ENCODE measurements at regions of chr1 and their contacts with region 1.

Region 1: GRCh38 chr1:184805667-184806295 is 51.1 kb upstream of the EDEM3 start:
- DNase-seq: peak; percentile 75
- CTCF ChIP-seq: peak; percentile 96

Region 2: DNA sequence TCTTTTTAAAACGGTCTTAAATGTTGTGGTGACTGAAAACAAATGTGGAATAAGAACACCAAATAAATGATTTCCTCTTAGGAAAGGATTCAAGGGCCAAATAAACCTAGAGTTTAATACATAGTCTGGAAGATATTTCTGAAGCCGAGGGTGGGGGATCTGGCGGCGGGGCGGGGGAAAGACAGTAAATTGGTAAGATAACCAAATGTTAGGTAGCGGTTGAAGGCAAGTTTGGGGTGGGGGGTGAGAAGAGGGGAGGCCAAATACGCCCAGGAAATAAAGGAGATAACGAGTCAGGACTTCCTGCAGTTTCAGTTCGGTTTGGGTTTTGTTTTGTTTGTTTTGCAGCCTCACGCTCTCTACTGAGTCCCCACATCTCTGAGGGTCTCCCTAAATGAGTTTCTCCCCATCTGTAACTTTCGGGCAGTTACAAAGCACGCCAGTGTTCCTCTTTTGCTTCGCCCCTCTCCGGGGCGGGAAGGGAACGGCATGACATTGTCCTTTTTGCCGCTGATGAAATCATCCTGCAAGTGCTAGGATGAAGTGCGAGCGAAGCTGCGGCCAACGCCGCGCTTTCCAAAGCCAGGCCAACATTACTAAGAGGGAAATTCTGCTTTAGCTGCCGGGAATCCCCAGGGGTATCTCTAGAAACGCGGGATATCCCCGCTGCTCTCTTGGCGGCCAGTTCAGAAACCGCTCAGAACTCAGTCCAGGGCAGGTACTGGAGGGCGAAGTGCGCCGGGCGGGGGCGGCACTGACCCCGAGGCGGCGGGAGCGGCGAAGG is 167.7 kb after region 1 on chr1:
- in situ Hi-C with region 1: no loop called
- DNase-seq: peak; percentile 77
- CTCF ChIP-seq: peak; percentile 17

Region 3: GRCh38 chr1:185062710-185063370 is 257.1 kb after region 1 on chr1:
- in situ Hi-C with region 1: no loop called
- DNase-seq: peak; percentile 34
- CTCF ChIP-seq: no peak

Region 4: DNA sequence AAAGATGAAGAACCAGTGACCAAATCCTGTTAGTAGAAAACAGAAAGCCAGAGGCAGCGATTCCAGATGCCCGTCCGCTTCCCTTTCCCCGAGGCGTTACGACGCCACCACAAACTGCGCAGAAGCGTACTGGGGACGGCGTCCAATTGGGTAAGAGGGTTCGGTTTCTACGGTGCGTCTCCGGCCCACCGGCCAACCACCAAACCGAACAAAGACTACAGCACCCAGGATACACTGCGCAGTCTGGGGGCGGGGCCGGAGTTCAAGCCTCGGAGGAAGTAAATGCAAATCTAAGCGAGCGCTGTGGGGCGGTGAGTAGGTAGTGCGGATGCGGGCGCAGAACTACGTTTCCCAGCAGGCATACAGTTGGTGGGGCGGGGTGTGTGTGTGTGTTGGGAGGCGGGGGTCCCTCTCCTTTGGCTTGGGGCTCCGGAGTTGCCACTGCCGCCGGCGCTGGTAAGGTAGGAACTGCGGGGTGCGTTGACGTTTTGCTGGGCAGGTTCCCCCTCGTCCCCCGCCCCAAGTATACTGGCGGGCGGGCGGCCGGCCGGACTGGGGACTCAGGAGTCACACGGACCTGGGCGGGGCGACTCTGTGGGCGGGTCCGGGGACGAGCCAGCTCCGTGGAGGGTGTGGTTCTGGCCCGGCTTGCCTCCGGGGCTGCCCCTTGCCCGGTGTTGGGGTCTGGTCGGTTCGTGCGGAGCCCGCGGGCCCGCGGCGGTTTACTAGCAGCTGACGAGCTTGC is 351.2 kb after region 1 on chr1 and contains the starts of genes SWT1 and TRMT1L:
- in situ Hi-C with region 1: loop called (anchors 10 kb)
- DNase-seq: peak; percentile 94
- CTCF ChIP-seq: no peak

Region 5: DNA sequence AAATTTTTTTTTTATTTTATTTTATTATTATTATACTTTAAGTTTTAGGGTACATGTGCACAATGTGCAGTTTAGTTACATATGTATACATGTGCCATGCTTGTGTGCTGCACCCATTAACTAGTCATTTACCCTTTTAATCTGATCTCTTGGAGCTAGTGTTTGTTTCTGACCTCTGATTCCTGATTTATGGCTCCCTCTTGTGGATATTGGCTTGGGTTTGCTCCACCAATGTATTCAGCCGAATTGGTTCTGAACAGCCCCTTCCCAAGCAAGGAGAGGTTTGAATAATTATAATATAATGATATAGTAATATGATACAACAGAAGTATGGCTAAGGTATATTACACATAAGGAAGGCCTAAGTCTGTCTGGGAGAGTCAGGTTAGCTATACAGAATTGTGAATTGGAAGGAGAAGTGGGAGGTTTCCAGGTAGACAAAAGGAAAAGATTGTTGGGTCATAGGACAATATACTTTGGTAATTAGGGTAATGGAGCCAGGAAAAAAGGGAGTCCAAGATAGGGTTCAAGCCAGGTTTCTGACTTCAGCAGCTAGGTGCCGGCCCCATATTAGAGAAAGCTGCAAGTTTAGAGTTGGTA is 875.4 kb after region 1 on chr1:
- in situ Hi-C with region 1: loop called (anchors 25 kb)
- DNase-seq: no peak
- CTCF ChIP-seq: peak; percentile 67

Measured in GM13976 (cell line).